ENCODE measurements at regions of chr18 and their contacts with region 1.

Region 1: DNA sequence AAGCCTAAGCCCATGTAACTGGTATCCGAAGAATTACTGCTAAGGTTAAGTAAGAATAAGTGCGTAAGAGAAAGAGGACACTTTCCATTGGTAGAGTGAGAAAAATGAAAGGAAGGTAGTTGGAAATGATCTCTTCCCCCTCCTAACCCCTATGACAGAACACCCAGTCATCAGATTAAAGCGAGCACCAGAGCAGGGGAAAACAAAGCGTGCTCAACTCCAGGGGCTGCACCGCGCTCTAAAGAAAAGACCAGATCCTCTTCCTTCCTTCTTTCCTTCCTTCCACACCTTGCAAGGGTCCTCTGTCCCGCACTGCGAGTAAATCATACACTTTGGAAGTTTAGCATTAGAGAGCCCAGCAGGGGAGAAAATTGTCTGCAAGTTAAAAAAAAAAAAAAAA is 971 bp upstream of the CDH7 start:
- DNase-seq: no peak
- H3K4me3 ChIP-seq: no peak overlapping the region
- H3K27ac ChIP-seq: no peak overlapping the region
- H3K4me1 ChIP-seq: no peaks in the 10 kb centered on the region
- H3K27me3 ChIP-seq: peaks cover 0 to 3% of the 10 kb centered on the region in 2 donors
- CTCF ChIP-seq: no peak
- POLR2A ChIP-seq: no peak

Region 2: DNA sequence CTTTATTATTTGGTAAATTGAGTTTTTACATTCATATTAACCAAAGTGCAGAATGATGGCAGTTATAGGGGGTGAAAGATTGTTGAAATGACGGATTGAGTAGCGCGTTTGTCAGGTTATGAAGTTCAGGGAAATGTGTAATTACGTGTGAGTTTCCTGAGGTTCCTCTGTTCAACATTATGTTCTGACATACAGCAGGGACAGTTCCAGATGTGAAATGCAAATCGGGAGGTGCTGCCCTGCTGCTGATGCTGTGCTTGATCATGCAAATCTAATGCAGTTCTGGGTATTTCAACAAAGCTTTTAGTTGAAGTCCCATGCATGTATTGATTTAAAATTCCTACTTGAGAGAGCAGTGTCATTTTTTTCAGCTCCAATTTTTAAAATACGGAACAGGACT is 58.9 kb after region 1 on chr18:
- intact Hi-C with region 1: loop called (anchors 10 kb)
- DNase-seq: no peak
- H3K4me3 ChIP-seq: no peak overlapping the region
- H3K27ac ChIP-seq: no peak overlapping the region
- H3K4me1 ChIP-seq: no peaks in the 10 kb centered on the region
- H3K27me3 ChIP-seq: no peaks in the 10 kb centered on the region
- CTCF ChIP-seq: no peak
- POLR2A ChIP-seq: no peak

Region 3: DNA sequence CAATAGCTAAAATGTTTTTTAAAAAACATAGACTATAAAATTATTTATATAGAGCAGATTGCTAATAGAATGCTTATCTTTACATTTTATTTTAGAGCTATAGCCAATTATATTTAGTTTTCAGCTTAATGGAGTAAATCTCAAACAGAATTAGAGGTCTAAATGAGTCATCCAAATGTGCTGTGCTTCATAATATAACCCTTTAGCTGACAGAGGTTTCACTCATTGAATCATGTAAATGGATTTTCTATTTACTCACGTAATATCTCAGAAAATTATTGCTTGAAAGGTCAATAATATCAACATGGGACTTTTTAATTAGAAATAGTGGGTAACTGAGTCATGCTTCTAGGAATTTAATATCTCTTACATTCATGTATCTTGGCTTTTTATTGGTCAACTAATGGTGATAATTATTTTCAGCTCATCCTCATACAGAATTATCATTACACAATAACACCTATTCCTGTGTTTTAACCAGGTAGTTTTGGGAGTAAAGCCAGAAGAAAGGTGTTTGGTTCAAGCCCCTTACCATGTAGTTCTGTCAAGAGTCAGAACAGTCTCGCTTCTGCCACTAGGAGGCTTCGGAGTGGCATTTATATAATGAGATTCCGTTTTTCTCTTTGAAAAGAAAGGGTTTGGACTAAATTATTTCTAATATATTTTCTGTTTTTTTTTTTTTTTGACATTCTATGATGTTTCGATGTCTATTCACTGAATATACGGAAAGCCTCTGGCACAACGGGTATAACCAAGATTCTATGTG is 218.6 kb after region 1 on chr18:
- intact Hi-C with region 1: no loop called
- DNase-seq: no peak
- H3K4me3 ChIP-seq: no peak overlapping the region
- H3K27ac ChIP-seq: no peak overlapping the region
- H3K4me1 ChIP-seq: no peaks in the 10 kb centered on the region
- H3K27me3 ChIP-seq: no peaks in the 10 kb centered on the region
- CTCF ChIP-seq: no peak
- POLR2A ChIP-seq: no peak

Measured in uterus (tissue), 4 donors.